Activated T-helper 2 cell treated with anti-CD3 and anti-CD28 coated beads, Interferon-gamma antibody, Interleukin-2, Interleukin-4, amounts not matched to agents 10 μg/mL and 5 μg/mL and 100 μg/mL, durations not matched to agents 14 hours and 24 hours and 36 hours (primary cell): ENCODE measurements at regions of chr5 and their contacts with region 1.

Region 1: DNA sequence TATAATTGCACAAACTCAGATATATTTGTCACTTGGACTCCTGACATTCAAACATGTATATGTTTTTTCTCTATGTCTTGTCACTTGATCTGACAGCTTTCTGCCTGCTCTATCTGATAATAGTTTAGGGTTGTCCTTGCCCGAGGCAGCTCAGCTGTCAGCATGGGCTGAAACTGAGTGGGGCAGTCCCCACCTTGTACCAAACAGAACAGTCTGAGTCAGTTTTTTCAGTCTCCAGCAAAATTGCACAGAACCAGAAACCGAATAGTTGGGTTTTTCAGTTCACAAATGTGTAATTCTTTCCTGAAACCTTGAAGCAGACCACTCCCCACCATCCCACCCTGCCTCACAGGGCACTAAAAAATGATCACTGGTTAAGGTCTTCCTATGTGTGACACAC is 9.5 kb upstream of the HAND1 start:
- DNase-seq: no peak
- H3K4me3 Mint-ChIP-seq: no peak overlapping the region
- H3K27ac Mint-ChIP-seq: peak overlapping the region; percentile 46
- H3K4me1 Mint-ChIP-seq: peaks cover 15% of the 10 kb centered on the region
- H3K27me3 Mint-ChIP-seq: peaks cover 76% of the 10 kb centered on the region

Region 2: DNA sequence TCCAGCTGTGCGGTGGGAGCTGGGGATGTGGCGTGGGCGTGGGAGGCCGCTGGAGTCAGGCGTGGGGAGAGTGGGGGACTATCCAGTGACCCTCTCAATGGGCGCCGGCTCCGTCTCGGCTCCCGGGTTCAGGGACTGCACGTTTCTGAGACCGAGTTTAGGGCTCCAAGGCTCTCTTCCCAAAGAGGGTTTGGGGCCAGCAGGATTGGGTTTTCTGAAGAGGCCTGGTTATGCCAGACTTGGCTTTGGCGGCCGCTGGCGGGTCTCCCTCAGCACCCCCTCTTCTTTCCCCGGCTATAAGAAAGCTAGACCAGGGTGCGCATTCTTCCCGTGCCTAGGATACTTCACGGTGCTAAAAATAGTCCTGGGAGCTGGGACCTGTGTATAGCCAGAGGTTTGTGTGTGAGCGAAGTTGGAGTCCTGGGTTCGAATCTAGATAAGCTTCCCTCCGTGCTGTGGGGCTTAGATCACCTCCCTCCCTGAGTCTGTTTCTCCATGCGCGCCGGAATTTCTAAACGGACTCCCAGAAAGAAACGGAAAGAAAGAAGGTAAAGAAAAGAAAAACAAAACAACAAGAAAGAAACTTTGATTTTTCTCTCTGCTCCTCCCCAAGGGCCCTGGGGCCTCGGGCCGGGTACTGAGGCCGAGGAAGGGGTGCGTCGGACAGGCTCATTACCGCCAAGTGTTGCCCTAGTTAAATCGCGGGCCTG is 14.5 kb before region 1 on chr5:
- intact Hi-C with region 1: loop called (anchors 2 kb)
- DNase-seq: no peak
- H3K4me3 Mint-ChIP-seq: no peak overlapping the region
- H3K27ac Mint-ChIP-seq: no peak overlapping the region
- H3K4me1 Mint-ChIP-seq: peaks cover 16% of the 10 kb centered on the region
- H3K27me3 Mint-ChIP-seq: peaks cover 77% of the 10 kb centered on the region

Region 3: GRCh38 chr5:154513669-154514084 is 26.1 kb after region 1 on chr5:
- intact Hi-C with region 1: loop called (anchors 2 kb)
- DNase-seq: no peak
- H3K4me3 Mint-ChIP-seq: no peak overlapping the region
- H3K27ac Mint-ChIP-seq: no peak overlapping the region
- H3K4me1 Mint-ChIP-seq: peaks cover 14% of the 10 kb centered on the region
- H3K27me3 Mint-ChIP-seq: peaks cover 26% of the 10 kb centered on the region

Region 4: DNA sequence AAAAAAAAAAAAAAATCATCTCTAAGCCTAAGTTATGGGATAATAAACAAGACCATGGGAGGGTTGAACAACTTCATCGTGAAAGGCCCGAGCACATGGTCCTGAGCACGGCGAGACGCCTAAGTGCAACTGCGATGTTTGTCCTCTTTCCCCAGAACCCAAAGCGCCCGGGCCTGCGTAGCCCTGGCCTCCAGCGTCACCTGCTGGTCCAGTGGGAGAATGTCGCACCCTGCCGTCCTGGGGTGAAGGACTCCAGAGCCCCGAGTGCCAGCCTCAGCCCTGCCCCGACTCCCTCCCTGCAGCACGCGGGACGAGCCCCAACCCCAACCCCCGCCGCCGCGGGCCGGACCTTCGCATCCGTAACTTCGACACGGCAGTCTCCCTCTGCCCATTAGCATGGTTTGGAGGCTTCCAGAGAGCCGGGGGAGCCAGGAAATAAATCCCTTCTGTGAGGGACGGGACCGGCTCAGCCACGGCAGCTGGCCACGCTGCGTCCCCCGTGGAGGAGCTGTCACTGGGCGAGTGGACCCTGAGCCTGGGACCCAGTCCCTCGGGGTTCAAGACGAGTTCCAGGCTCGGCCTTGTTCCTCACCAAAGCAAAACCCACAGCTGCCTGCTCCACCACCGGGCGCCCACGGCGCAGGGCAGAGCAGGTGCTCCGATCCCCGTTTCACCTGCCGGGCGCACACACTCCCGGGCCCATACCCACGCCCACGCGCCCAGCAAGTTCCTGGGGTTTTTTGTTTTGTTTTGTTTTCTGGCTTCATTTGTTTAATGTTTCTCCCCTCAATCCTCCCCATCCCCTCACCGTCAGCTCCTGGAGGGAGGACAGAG is 123.0 kb after region 1 on chr5:
- intact Hi-C with region 1: loop called (anchors 2 kb)
- DNase-seq: peak; percentile 53
- H3K4me3 Mint-ChIP-seq: no peak overlapping the region
- H3K27ac Mint-ChIP-seq: no peak overlapping the region
- H3K4me1 Mint-ChIP-seq: peaks cover 4% of the 10 kb centered on the region
- H3K27me3 Mint-ChIP-seq: peaks cover 46% of the 10 kb centered on the region